Motor neuron (in vitro differentiated cells): ENCODE measurements at regions of chr5 and their contacts with region 1.

Region 1: DNA sequence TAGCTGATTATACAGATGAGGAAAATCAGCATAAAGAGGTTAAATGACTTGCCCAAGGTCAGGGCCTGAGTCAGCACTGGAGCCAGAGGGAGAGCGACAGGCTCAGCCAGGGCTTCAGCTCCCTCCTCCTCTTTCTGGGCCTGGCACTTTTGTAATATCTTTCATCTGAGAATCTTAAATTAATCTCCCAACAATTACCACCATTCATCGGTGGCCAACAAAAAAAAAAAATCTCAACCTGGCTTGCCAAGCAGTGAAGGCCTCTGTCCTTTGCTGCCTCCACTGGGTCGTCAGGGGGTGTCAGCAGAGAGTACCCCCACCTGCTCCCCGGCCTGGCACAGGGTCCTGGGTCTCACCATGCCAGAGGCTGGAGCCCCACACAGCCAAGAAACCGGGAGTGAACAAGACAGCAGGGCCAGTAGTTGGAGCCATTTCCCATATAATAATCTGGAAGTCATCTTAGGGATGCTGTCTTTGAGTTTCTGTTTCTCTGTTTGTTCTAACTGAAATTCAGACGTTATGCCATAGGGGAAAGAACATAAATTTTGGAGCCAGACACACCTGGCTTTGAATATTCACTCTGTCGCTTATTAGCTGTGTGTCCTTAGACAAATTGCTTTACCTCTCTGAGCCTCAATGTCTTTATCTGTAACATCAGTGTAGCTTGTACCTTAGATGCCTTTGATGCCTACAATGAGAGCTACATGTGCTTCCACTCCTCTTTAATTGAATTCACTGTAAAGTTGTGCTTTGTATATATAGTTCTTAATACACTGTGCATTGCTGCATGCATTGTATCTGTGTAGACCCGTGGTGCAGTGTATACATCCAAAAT is 299.9 kb upstream of the MSX2 start:
- ATAC-seq: no peak
- H3K4me3 ChIP-seq: no peak overlapping the region
- H3K27ac ChIP-seq: no peak overlapping the region
- H3K4me1 ChIP-seq: no peaks in the 10 kb centered on the region

Region 2: DNA sequence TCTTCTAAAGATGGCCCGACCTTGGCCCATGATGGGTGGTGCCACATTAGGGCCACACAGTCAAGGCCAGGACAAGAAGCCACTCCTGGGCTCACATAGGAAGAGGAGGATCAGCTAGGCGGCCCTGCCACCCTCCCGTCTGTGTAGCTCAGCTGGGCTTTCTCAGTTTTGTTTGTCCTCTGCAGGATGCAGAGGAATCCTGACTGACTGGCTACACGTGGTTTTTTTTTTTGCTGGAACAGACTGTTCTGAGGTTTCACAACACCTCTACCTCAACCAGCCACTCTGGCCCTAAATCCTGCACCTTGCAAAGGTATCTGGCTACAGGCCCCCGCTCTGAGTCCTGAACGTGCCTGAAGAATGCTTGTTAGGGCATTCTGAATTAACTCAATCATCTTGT is 211.7 kb after region 1 on chr5:
- in situ Hi-C with region 1: no loop called
- ATAC-seq: no peak
- H3K4me3 ChIP-seq: no peak overlapping the region
- H3K27ac ChIP-seq: no peak overlapping the region
- H3K4me1 ChIP-seq: no peaks in the 10 kb centered on the region

Region 3: DNA sequence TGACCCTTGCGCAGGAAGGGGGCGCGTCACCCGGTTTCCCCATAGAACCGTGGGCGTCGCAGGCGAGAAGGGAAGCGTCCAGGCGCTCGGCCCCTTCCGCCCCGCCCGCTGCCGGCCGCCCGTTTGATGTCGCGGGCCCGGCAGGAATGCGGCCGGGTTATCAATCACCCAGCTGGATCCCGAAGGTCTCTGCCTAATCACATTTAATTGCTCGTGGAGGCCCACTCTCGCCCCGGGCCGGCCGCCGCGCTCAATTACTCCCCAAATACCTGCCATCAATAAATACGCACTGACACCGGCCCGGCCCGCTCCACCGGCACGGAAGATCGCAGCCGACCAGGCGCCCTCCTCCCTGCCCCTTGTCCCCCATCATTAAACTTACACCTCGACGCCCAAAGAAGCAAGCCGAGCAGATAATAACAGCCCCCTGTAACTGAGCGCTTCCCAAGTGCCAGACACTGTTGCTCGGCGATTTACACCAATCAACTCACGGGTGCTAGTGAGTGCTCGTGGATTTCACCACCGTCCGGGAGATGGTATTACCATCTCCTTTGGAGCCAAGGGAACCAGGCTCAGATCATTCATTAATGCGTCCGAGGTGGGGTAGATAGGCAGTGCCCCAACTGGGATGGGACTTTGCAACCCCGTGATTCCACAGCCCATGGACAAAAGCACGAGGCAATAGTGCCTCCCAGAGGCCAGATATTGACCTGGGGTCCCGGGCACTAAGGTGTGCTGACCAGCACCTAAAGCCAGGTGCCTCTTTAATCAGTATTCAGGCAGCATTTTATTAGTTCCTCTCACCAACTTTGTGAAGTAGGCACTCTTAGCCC is 311.3 kb after region 1 on chr5:
- in situ Hi-C with region 1: loop called in 4 of 9 experiments (anchors 10 to 25 kb)
- ATAC-seq: peak in 6 of 8 experiments; percentile 40 to 57 (median 44)
- H3K4me3 ChIP-seq: no peak overlapping the region
- H3K27ac ChIP-seq: no peak overlapping the region
- H3K4me1 ChIP-seq: peaks cover 5 to 19% of the 10 kb centered on the region in 2 donors

Region 4: DNA sequence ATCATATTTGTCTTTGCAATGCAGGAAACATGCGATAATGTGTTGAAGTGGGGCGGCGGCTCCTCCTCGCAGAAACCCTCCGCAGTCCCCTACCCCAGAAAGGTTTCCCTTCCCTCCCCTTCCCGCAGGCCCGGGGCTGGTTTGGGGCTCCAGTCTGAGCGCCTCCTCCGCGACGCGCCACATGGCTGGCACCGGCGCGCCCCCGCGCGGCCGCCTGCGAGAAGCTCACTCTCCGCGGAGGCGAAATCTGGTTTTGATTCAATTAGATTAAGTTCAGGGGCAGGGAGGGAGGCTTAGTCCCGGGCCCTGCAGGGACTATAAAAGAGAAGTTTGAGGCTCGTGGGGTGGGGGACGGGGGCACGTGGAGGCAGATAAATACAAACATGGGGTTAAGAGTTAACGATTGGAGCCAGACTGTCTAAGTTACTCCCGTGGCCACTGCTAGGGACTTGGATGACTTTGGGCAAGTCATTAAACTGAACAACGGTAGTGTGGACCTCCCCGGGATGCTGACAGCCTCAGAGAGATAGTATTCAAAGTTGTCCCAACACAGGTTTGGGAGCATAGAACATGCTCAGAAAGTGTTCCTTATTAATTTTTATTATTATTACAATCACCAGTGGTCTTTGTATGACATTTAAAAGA is 369.4 kb after region 1 on chr5:
- in situ Hi-C with region 1: loop called in 4 of 9 experiments (anchors 10 to 25 kb)
- ATAC-seq: peak; percentile 70 to 99 (median 82)
- H3K4me3 ChIP-seq: no peak overlapping the region
- H3K27ac ChIP-seq: no peak overlapping the region
- H3K4me1 ChIP-seq: no peaks in the 10 kb centered on the region

Region 5: DNA sequence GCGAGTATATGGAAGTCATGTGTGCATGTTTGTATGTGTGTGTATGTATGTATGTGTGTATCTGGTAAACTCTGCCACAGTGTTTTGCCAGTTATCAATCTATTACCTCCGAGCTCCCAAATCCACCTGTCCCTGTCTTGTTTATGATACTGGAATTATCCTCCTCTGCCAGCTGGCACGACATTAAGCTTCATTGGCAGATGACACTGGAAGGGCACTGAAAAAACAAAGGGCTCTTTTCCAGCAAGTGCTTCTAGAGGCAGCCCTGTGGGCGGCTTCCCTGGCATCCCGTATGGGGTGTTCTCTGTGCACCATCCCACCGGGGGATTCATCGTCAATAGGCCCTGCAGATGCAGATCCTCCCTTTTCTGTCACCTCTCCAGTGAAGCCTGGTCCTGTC is 521.4 kb after region 1 on chr5:
- in situ Hi-C with region 1: loop called in 4 of 9 experiments (anchors 10 to 25 kb)
- ATAC-seq: no peak
- H3K4me3 ChIP-seq: no peak overlapping the region
- H3K27ac ChIP-seq: no peak overlapping the region
- H3K4me1 ChIP-seq: no peaks in the 10 kb centered on the region